ENCODE measurements at regions of chr14 and their contacts with region 1.

Region 1: GRCh38 chr14:50003213-50004031 is 110.5 kb downstream of the ARF6 start:
- DNase-seq: peak; percentile 79 to 86 (median 80)
- H3K4me3 ChIP-seq: peak overlapping the region; percentile 55 to 80 (median 77)
- H3K4me3 Mint-ChIP-seq: peak overlapping the region; percentile 87 to 96
- H3K27ac ChIP-seq: peak overlapping the region; percentile 83 to 99
- H3K27ac Mint-ChIP-seq: peak overlapping the region; percentile 98 to 99 (median 99)
- H3K4me1 ChIP-seq: peaks cover 57 to 65% of the 10 kb centered on the region in 2 donors
- H3K4me1 Mint-ChIP-seq: peaks cover 51% of the 10 kb centered on the region
- H3K27me3 ChIP-seq: no peaks in the 10 kb centered on the region
- H3K27me3 Mint-ChIP-seq: no peaks in the 10 kb centered on the region
- CTCF ChIP-seq: peak; percentile 11

Region 2: DNA sequence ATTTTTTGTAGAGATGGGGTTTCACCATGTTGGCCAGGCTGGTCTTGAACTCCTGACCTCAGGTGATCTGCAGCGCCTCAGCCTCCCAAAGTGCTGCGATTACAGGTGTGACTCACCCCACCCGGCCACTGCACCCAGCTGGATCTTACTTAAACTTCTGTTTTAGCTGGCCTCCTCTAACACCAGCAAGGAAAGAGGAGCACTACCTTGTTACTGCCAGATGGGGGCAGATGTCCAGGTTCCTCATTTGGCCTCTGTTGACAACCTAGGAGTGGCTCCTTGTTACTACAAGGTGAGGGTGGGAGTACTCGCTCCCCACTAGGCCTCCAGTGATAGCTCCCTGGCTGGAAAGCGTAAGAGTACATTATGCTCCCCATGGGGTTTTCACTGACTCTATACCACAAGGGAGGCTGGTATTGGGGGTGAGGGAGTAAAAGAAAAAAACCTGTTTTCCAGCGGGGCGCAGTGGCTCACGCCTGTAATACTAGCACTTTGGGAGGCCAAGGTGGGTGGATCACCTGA is 123.7 kb before region 1 on chr14:
- intact Hi-C with region 1: loop called in 1 of 2 experiments (anchors 5 kb)
- DNase-seq: peak; percentile 73 to 85 (median 80)
- H3K4me3 ChIP-seq: no peak overlapping the region
- H3K4me3 Mint-ChIP-seq: peak overlapping the region in 1 of 2 donors; percentile 26
- H3K27ac ChIP-seq: peak overlapping the region in 1 of 2 donors; percentile 38
- H3K27ac Mint-ChIP-seq: peak overlapping the region; percentile 38 to 91 (median 87)
- H3K4me1 ChIP-seq: peaks cover 20 to 34% of the 10 kb centered on the region in 2 donors
- H3K4me1 Mint-ChIP-seq: peaks cover 29% of the 10 kb centered on the region
- H3K27me3 ChIP-seq: no peaks in the 10 kb centered on the region
- H3K27me3 Mint-ChIP-seq: peaks cover 0 to 5% (median 2%) of the 10 kb centered on the region in 3 donors
- CTCF ChIP-seq: peak; percentile 82

Region 3: GRCh38 chr14:50060871-50061663 is 57.6 kb after region 1 on chr14:
- intact Hi-C with region 1: no loop called
- DNase-seq: peak; percentile 76 to 91 (median 87)
- H3K4me3 ChIP-seq: peak overlapping the region in 1 of 3 experiments; percentile 38
- H3K4me3 Mint-ChIP-seq: peak overlapping the region; percentile 27 to 59
- H3K27ac ChIP-seq: peak overlapping the region; percentile 92 to 94
- H3K27ac Mint-ChIP-seq: peak overlapping the region; percentile 95 to 100 (median 99)
- H3K4me1 ChIP-seq: peaks cover 86 to 89% of the 10 kb centered on the region in 2 donors
- H3K4me1 Mint-ChIP-seq: peaks cover 92% of the 10 kb centered on the region
- H3K27me3 ChIP-seq: no peaks in the 10 kb centered on the region
- H3K27me3 Mint-ChIP-seq: peaks cover 0 to 6% (median 2%) of the 10 kb centered on the region in 3 donors
- CTCF ChIP-seq: peak; percentile 21